ENCODE measurements at regions of chr1 and their contacts with region 1.

Region 1: DNA sequence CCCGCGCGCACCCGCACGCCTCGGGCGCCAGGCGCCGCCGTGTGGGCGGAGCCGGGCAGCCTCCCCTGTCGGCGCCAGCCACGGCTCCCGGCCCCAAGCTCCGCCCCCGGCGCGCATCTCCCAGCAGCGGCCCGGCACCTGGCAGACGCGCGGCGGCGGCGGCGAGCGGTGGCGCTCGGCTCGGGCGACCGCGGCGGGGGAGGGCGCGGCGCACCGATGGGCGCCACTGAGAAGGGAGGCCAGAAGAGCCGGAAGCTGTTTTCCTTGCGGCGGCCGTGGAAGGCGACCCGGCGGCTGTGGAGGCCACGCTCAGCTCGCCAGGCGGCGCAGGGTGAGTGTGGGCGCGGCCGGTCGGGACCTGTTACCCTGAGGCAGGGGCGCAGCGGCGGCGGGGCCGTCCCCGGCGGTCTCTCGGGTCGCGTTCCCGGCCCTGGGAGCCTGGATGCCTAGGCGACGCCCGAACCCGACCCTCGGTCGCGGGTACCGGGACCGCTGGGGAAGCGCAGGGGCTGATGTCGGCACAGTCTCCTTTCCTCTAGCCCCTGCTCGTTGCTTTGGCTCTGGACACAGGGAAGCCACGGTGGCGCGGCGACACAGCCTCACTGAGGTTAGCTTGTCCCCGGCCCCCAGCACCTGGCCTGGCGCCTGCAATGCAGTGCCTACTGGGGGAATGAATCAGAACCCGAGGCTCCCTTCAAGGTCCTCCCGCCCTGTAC is 54.9 kb upstream of the DNAJC6 start:
- DNase-seq: peak; percentile 97
- H3K4me3 ChIP-seq: peak overlapping the region; percentile 81 to 82
- H3K27ac ChIP-seq: peak overlapping the region in 1 of 2 experiments; percentile 86; a peak in 2 of 4 replicates
- H3K4me1 ChIP-seq: peaks cover 0 to 4% of the 10 kb centered on the region in 2 experiments; a peak in 1 of 4 replicates
- H3K27me3 ChIP-seq: no peaks in the 10 kb centered on the region
- CTCF ChIP-seq: peak; percentile 15; the same call in 1 of the 2 replicates
- EP300 ChIP-seq: no peak
- RAD21 ChIP-seq: no peak

Region 2: GRCh38 chr1:65309304-65310077 is 55.0 kb after region 1 on chr1 and contains the start of gene DNAJC6:
- CTCF ChIA-PET with region 1: interaction called, 5 read pairs
- POLR2A ChIA-PET with region 1: interaction called, 17 read pairs
- DNase-seq: peak; percentile 87
- H3K4me3 ChIP-seq: peak within 1 kb of the TSS; percentile 45 to 62
- H3K27ac ChIP-seq: peak within 1 kb of the TSS in 1 of 2 experiments; percentile 77; a peak in 2 of 4 replicates
- H3K4me1 ChIP-seq: peaks cover 0 to 2% of the 10 kb centered on the region in 2 experiments; a peak in 1 of 4 replicates
- H3K27me3 ChIP-seq: no peaks in the 10 kb centered on the region
- CTCF ChIP-seq: no peak
- EP300 ChIP-seq: no peak
- RAD21 ChIP-seq: no peak
- polyA plus RNA-seq, gene DNAJC6: 1.9 and 2.5 TPM in 2 replicates